Heart left ventricle (tissue), 16 donors: ENCODE measurements at regions of chr2 and their contacts with region 1.

Region 1: DNA sequence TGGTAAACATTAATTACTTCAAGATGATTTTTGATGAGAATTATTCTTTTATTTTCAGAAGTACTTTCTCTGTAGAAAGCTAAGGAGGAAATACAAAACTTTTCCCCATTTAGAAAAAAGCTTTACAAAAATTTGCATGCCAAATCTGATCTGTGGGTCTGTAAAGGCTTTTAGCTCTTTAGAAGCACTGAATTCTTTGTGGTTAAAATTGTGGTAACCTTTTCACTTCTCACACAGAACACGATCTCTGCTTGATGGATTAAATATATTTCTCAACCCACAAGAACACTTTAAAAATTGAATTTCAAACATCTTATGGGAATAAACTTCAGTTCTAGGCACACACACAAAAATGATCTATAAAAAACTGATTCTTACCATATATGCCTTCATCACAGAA is 63.7 kb downstream of the VIL1 start:
- DNase-seq: no peak
- ATAC-seq: no peak
- H3K4me3 ChIP-seq: no peak overlapping the region
- H3K27ac ChIP-seq: no peak overlapping the region
- H3K4me1 ChIP-seq: peaks cover 0 to 5% (median 0%) of the 10 kb centered on the region in 12 donors
- H3K27me3 ChIP-seq: no peaks in the 10 kb centered on the region
- CTCF ChIP-seq: no peak
- POLR2A ChIP-seq: no peak

Region 2: DNA sequence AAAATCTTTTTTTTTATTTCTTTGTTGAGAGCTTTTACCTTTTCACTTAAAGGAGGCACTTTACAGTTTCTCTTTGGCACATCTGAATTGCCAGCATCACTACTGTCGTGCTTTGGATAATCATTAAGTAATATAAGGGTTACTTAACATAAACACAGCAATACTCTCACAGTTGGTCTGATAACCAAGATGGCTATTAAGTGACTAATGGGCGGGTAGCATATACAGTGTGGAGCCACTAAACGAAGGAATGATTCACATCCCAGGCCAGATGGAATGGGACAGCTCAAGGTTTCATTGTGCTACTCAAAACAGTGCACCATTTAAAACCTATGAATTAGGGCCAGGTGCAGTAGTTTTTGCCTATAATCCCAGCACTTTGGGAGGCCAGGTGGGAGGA is 57.4 kb after region 1 on chr2:
- intact Hi-C with region 1: loop called in 1 of 10 experiments (anchors 10 kb)
- DNase-seq: no peak
- ATAC-seq: no peak
- H3K4me3 ChIP-seq: no peak overlapping the region
- H3K27ac ChIP-seq: no peak overlapping the region
- H3K4me1 ChIP-seq: peaks cover 0 to 4% (median 0%) of the 10 kb centered on the region in 12 donors
- H3K27me3 ChIP-seq: no peaks in the 10 kb centered on the region
- CTCF ChIP-seq: no peak
- POLR2A ChIP-seq: no peak